ENCODE measurements at regions of chr10 and their contacts with region 1.

Region 1: DNA sequence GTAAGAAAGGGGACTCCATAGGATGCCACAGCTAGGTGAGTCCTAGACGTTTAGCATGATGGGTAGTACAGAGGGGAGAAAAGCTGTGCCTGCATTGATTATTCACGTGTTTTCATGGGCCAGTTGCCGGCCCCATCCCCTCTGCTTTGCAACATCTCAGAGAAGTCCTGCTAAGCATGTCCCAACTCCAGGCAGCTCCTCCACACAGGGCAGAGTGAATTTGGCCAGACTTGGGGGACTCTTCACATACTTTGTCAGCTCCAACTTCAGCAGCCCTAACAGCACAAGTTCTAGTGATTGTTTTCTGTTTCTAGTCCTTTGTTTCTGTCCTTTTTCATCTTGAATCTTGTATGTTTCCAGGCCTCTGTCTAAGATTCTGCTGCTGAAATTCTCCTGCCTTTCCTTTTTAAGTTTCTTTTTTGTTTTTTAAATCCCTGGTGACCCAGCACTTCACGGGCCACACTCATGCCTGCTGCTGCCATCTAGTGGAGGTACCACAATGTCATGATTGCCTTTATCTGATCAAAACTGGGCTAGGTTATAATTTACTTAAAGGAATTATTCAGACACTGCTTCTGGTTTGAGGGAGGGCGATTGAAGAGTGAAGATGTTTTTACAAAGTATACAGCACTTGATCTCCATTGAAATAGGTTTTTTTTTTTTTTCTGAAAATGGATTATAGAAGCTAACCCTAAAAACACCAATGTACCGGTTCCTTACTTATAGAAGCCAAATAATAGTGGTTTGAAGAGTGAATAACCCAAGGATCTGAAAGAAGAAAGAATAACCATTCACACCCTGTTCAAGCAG is 276.9 kb downstream of the CSTF2T start:
- DNase-seq: peak; percentile 24 to 75
- ATAC-seq: peak; percentile 53 to 82 (median 66)
- H3K4me3 ChIP-seq: peak overlapping the region in 1 of 10 donors; percentile 8
- H3K27ac ChIP-seq: peak overlapping the region; percentile 19 to 87 (median 72)
- H3K4me1 ChIP-seq: peaks cover 0 to 52% (median 20%) of the 10 kb centered on the region in 9 donors
- H3K27me3 ChIP-seq: no peaks in the 10 kb centered on the region
- CTCF ChIP-seq: peak; percentile 61 to 81 (median 75)

Region 2: GRCh38 chr10:51010977-51011376 is 411.5 kb before region 1 on chr10:
- intact Hi-C with region 1: loop called in 1 of 10 experiments (anchors 5 kb)
- DNase-seq: no peak
- ATAC-seq: peak in 3 of 8 donors; percentile 27 to 54 (median 46)
- H3K4me3 ChIP-seq: no peak overlapping the region
- H3K27ac ChIP-seq: no peak overlapping the region
- H3K4me1 ChIP-seq: peaks cover 0 to 25% (median 6%) of the 10 kb centered on the region in 9 donors
- H3K27me3 ChIP-seq: no peaks in the 10 kb centered on the region
- CTCF ChIP-seq: peak; percentile 59 to 81 (median 73)

Region 3: DNA sequence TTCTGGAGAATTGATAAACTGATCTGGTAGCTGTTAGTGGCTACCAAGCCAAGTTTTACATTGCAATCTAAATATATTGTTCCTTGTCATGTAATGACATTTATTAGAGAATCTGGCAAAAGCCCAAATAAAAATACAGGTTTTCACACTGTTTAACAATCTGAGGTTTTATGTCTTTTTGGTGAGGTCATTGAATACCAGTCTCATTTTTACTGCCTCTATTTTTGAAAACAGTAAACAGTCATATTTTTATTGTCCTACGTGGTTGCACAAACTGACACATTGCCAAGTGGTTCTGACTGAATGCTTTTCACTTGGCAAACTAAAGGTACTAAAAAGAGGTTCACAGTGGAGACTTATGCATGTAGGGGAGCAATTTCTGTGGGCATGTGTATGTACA is 190.8 kb before region 1 on chr10:
- intact Hi-C with region 1: loop called in 1 of 10 experiments (anchors 10 kb)
- DNase-seq: no peak
- ATAC-seq: peak in 1 of 8 donors; percentile 35
- H3K4me3 ChIP-seq: no peak overlapping the region
- H3K27ac ChIP-seq: peak overlapping the region in 8 of 10 donors; percentile 2 to 68 (median 42)
- H3K4me1 ChIP-seq: peaks cover 0 to 64% (median 21%) of the 10 kb centered on the region in 9 donors
- H3K27me3 ChIP-seq: no peaks in the 10 kb centered on the region
- CTCF ChIP-seq: no peak

Region 4: GRCh38 chr10:51340845-51341610 is 81.5 kb before region 1 on chr10:
- intact Hi-C with region 1: no loop called
- DNase-seq: no peak
- ATAC-seq: no peak
- H3K4me3 ChIP-seq: no peak overlapping the region
- H3K27ac ChIP-seq: peak overlapping the region in 1 of 10 donors; percentile 13
- H3K4me1 ChIP-seq: peaks cover 0 to 26% (median 0%) of the 10 kb centered on the region in 9 donors
- H3K27me3 ChIP-seq: no peaks in the 10 kb centered on the region
- CTCF ChIP-seq: no peak

Region 5: DNA sequence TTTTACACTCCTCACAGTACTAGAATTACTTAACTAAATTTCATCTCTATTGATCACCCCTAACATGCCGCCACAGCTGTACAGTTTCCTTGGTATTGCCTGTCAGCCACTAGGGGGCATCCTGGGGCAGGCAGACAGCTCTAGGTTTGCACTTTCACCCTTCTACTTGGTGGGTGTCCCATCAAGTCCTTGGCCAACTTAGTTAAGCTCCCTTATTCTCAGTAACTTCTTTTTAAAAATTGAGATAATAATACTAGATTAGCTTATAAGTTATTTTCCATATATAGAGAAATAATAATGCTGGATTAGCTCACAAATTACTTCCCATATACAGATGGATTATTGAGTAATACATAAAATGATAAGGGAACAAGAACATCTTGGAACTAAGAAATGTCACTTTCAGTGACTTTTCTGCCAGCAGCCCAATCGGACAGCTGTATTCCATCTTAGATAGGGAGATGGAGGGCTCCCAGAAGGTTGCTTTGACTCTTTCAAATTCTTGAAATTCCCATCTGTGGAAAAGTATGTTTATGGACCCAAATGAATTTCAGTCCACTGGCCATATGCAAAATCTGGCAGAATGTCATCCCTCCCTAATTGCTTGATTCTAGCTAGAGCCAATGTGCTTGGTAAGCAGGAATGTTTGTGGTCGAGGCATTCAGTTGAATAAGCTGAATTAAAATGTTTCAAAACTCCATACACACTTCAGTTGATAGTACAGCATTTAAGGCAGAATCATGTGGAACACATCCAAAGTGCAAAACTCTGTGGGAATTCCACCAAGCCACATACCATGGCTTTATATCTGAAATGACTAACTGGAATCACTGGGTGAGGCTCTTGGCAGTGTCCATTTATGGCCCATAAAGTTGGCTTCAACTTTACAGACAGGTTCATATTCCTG is 32.8 kb before region 1 on chr10:
- intact Hi-C with region 1: loop called in 1 of 10 experiments (anchors 2 kb)
- DNase-seq: peak; percentile 16 to 18
- ATAC-seq: peak; percentile 38 to 78 (median 72)
- H3K4me3 ChIP-seq: no peak overlapping the region
- H3K27ac ChIP-seq: peak overlapping the region in 3 of 10 donors; percentile 2 to 33 (median 10)
- H3K4me1 ChIP-seq: peaks cover 0 to 26% (median 14%) of the 10 kb centered on the region in 9 donors
- H3K27me3 ChIP-seq: no peaks in the 10 kb centered on the region
- CTCF ChIP-seq: peak; percentile 46 to 86 (median 78)

Region 6: DNA sequence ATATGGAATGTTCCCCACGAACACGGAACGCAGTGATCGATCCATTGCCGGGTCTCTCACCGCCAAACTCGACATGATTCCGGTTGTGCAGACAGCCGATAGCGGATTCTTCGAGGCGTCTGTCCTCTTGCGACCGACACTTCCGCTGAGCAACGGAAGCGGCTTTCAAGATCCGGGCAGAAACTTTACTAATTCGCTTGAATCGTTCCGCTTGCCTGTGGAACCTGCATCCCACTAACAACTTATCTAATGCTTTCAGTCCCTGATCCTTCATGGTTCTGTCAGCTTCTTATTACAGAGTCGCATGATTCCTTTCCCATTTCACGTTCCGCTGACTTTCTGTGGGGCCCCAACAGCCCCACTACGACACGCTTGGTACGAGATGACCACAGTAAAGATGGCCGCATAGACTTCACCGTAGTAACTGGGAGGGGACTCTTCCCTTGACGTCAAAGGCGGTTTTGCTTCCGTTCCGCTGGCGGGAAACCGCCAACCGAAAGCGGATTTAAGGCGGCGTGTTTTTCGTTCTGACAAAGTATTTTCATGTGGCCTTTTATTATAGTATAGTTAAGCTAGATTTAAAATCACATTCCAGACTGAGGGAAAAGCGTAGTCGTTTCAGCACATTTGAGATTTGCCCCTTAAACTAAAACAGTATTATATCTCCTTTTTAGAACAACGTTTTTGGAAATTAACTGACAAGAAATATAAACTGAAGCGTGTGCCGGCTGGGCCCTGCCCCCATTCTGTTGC is 277.1 kb after region 1 on chr10 and contains the start of gene CSTF2T:
- intact Hi-C with region 1: loop called in 1 of 10 experiments (anchors 2 kb)
- DNase-seq: peak; percentile 79 to 94
- ATAC-seq: peak; percentile 96 to 99 (median 97)
- H3K4me3 ChIP-seq: peak within 1 kb of the TSS; percentile 62 to 84 (median 72)
- H3K27ac ChIP-seq: peak within 1 kb of the TSS; percentile 88 to 99 (median 94)
- H3K4me1 ChIP-seq: peaks cover 2 to 53% (median 43%) of the 10 kb centered on the region in 9 donors
- H3K27me3 ChIP-seq: no peaks in the 10 kb centered on the region
- CTCF ChIP-seq: no peak
- total RNA-seq, gene CSTF2T: 20.6 to 31.6 (median 23.1) TPM

Region 7: GRCh38 chr10:51960494-51960895 is 538.0 kb after region 1 on chr10:
- intact Hi-C with region 1: loop called in 1 of 10 experiments (anchors 10 kb)
- DNase-seq: peak in 1 of 2 donors; percentile 15
- ATAC-seq: peak in 7 of 8 donors; percentile 39 to 69 (median 59)
- H3K4me3 ChIP-seq: no peak overlapping the region
- H3K27ac ChIP-seq: no peak overlapping the region
- H3K4me1 ChIP-seq: peaks cover 0 to 24% (median 4%) of the 10 kb centered on the region in 9 donors
- H3K27me3 ChIP-seq: no peaks in the 10 kb centered on the region
- CTCF ChIP-seq: peak; percentile 17 to 69 (median 51)